ENCODE measurements at regions of chr5 and their contacts with region 1.

Region 1: DNA sequence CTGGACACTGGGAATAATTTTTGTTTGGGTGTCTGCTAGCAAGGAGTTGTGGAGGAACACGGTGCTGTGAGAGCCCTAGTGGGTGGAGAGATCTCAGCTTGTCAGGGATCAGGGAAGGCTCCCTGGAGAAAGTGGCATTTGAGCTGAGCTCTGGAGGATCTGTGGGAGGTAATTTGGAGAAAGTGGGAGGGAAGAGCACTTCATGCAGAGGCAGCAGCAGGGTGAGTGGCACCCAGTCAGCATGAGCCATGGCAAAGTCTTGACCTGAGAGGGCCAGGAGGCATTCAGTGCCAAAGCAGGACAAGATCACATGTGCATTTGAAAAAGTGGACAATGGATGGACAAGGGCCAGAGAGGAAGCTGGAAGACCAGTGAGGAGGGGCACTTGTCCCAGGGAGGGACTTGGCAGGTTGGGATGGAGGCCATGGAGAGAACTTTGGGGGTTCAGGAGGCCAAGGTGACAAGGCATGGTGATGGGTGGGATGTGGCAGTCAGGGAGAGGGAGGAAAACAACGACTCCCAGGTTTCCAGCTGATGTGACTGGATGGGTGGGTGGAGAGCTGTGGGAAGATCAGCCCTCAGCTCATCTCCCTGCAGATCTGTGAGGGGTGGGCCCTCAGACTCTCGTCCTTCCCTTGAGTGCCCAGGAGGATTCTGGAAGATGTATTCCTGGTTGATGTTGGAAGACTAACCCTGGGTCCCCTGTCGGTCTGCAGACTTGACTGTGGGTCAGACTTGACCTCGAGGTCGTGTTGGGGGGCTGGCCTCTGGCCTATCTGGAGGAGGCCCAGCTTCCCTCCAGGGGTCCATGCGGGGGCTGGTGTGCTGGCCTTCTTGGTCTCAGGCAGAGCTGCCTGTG is 68.9 kb upstream of the PITX1 start:
- DNase-seq: no peak

Region 2: GRCh38 chr5:136087961-136088871 is 985.3 kb after region 1 on chr5:
- intact Hi-C with region 1: loop called in 1 of 2 experiments (anchors 5 kb)
- DNase-seq: peak; percentile 95

Measured in posterior vena cava (tissue), 2 donors.